ENCODE measurements at regions of chr17 and their contacts with region 1.

Region 1: GRCh38 chr17:28552246-28552999 is at the start of gene UNC119:
- DNase-seq: no peak
- ATAC-seq: peak; percentile 78
- H3K4me3 ChIP-seq: peak within 1 kb of the TSS; percentile 98
- H3K27ac ChIP-seq: peak within 1 kb of the TSS; percentile 73
- H3K4me1 ChIP-seq: peaks cover 33% of the 10 kb centered on the region
- H3K27me3 ChIP-seq: no peaks in the 10 kb centered on the region
- CTCF ChIP-seq: no peak
- EP300 ChIP-seq: no peak
- POLR2A ChIP-seq: peak; percentile 90
- RAD21 ChIP-seq: no peak
- polyA plus RNA-seq, gene UNC119: 2.7 to 7.4 TPM

Region 2: GRCh38 chr17:28371245-28372202 is 180.9 kb before region 1 on chr17 and contains the start of gene SARM1:
- CTCF ChIA-PET with region 1: no interaction called
- POLR2A ChIA-PET with region 1: no interaction called
- RAD21 ChIA-PET with region 1: no interaction called
- SMC1A ChIA-PET with region 1: no interaction called
- in situ Hi-C with region 1: loop called (anchors 10 kb)
- intact Hi-C with region 1: loop called (anchors 10 kb)
- DNase-seq: peak; percentile 63
- ATAC-seq: peak; percentile 97
- H3K4me3 ChIP-seq: peak within 1 kb of the TSS; percentile 88
- H3K27ac ChIP-seq: no peak within 1 kb of the TSS
- H3K4me1 ChIP-seq: peaks cover 7% of the 10 kb centered on the region
- H3K27me3 ChIP-seq: no peaks in the 10 kb centered on the region
- CTCF ChIP-seq: no peak
- EP300 ChIP-seq: no peak
- POLR2A ChIP-seq: peak; percentile 76
- RAD21 ChIP-seq: no peak
- polyA plus RNA-seq, gene SARM1: 0.56 to 1.5 TPM

Region 3: DNA sequence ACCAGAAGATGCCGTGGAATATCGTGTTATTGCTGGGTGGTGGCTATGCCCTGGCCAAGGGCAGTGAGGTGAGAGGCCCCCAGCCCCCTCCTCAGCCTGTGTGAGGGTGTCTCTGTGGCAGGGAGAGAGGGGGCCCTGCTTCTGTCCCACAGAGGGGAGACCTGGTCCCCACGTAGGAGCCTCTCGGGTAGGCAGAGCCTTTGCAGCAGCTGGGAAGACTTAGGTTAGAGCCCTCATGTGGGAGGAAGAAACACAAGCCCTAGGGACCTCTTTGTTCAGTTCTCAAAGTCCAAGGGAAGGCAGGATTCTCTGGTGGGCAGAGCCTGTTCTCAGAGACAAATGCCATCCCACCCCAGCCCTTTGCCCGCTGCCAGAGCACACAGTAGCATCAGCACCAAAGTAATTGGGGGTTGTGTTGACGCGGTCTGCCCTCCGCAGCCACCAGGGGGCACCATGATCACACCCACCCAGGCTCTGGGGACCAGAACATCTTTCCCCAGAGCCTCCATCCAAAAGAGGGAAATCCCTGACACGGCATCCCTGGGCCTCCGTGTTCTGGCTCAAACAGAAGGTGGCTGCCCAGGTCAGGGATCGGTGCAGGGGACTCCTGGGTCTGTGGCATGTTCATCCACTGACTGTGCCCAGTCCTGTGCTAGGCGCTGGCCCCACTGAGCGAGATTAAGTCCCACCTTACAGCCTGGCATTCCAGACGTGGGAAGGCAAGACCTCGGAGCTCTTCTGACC is 57.8 kb before region 1 on chr17:
- CTCF ChIA-PET with region 1: interaction called, 316 read pairs
- POLR2A ChIA-PET with region 1: interaction called, 48 read pairs
- RAD21 ChIA-PET with region 1: interaction called, 37 read pairs
- SMC1A ChIA-PET with region 1: interaction called, 53 read pairs
- in situ Hi-C with region 1: loop called (anchors 5 kb)
- intact Hi-C with region 1: no loop called
- DNase-seq: no peak
- ATAC-seq: peak; percentile 95
- H3K4me3 ChIP-seq: no peak overlapping the region
- H3K27ac ChIP-seq: no peak overlapping the region
- H3K4me1 ChIP-seq: peaks cover 9% of the 10 kb centered on the region
- H3K27me3 ChIP-seq: no peaks in the 10 kb centered on the region
- CTCF ChIP-seq: peak; percentile 91 to 99 (median 92); a peak in 5 of 6 replicates
- EP300 ChIP-seq: no peak
- POLR2A ChIP-seq: no peak
- RAD21 ChIP-seq: peak; percentile 95

Region 4: DNA sequence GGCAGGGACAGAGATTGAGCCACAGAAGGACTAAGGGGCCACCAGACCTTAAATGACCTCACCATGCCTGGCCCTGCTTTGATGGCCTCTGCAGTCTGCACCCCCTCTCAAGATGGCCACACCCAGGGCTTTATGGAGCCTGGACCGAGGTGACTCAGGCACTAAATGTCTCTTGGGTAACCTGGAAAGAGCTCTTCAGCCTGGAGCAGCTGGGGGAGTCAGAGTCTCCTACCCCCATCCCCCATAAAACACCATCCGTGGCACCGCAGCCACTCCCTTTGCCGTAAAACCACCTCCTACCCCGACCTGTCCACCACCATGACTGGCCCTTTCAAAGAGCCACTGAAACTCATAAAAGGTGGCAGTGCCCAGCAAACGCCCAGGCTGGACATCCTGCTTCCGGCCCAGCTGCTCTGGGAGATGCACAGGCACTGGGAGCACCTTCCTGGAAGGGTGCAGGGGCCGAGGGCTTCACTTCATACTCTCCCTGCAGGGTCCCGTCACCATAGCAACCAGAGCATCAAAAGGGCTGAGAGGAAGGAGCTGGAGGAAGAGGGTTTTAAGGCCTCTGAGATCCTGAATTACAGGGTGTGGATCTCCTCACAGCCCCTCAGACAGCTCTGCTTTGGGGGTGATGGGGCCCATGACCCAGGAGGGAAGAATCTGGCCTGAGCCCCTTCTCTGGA is 24.0 kb before region 1 on chr17:
- CTCF ChIA-PET with region 1: no interaction called
- POLR2A ChIA-PET with region 1: no interaction called
- RAD21 ChIA-PET with region 1: no interaction called
- SMC1A ChIA-PET with region 1: no interaction called
- in situ Hi-C with region 1: no loop called
- intact Hi-C with region 1: no loop called
- DNase-seq: no peak
- ATAC-seq: no peak
- H3K4me3 ChIP-seq: no peak overlapping the region
- H3K27ac ChIP-seq: no peak overlapping the region
- H3K4me1 ChIP-seq: no peaks in the 10 kb centered on the region
- H3K27me3 ChIP-seq: no peaks in the 10 kb centered on the region; a peak in 1 of 4 replicates
- CTCF ChIP-seq: no peak
- EP300 ChIP-seq: no peak
- POLR2A ChIP-seq: no peak
- RAD21 ChIP-seq: no peak

Region 5: DNA sequence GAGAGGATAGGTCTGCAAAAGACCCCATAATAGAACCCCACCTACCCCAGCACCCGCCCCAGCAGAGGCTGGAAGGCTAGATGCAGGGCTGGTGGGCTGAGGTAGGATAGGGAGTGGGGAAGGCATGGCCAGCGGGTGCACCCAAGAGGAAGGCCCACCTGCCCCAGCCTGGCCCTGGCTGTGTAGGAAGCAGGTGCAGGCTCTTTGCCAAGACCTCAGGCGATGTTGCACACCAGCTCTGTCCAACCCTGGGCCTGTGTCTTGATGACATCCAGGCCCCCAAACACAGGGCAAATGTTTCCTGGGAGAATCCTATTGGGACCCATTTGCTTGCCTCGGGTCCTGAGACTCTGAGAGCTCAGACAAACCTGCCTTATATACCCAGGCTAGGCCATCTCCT is 12.2 kb before region 1 on chr17:
- CTCF ChIA-PET with region 1: interaction called, 7 read pairs
- POLR2A ChIA-PET with region 1: interaction called, 5 read pairs
- RAD21 ChIA-PET with region 1: interaction called, 5 read pairs
- SMC1A ChIA-PET with region 1: interaction called, 10 read pairs
- in situ Hi-C with region 1: no loop called
- intact Hi-C with region 1: no loop called
- DNase-seq: no peak
- ATAC-seq: no peak
- H3K4me3 ChIP-seq: no peak overlapping the region
- H3K27ac ChIP-seq: no peak overlapping the region
- H3K4me1 ChIP-seq: no peaks in the 10 kb centered on the region
- H3K27me3 ChIP-seq: no peaks in the 10 kb centered on the region
- CTCF ChIP-seq: no peak
- EP300 ChIP-seq: no peak
- POLR2A ChIP-seq: no peak
- RAD21 ChIP-seq: no peak

Region 6: DNA sequence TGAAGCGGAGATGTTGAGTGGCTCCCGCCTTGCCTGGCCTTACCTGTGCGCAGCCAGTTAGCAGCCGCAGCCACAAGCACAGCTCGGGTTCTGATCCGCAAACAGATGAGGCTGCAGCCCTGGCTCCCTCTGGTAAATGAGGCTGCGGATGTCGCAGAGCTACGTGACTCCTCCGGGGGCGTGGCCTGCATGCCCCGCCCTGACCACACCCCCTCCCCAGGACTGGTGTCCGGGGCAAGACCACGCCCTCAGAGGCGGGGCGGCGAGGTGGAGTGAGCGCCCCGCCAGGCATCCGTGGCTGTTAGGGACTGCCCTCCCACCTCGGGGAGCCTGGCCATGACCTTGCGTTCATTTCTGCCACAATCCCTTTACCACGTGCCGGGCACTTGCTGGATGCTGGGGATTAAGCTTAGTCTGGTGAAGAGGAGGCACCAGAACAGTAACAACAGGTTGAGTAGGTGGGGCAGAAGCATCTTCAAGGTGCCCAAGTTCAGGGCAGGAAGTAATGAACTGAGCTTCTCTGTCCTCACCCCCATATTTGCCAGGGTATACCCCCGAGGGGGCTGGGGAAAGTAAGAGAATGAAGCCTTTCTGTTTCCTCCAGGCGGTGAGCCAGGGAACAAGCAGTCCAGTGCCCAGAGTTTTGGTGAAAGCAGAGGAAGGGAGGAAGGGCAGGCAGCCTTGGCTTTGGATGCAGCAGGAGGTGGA is 24.5 kb after region 1 on chr17 and contains the start of gene ALDOC:
- CTCF ChIA-PET with region 1: interaction called, 83 read pairs
- POLR2A ChIA-PET with region 1: interaction called, 148 read pairs
- RAD21 ChIA-PET with region 1: interaction called, 102 read pairs
- SMC1A ChIA-PET with region 1: interaction called, 89 read pairs
- in situ Hi-C with region 1: no loop called
- intact Hi-C with region 1: no loop called
- DNase-seq: peak; percentile 88
- ATAC-seq: peak; percentile 97
- H3K4me3 ChIP-seq: peak within 1 kb of the TSS; percentile 66
- H3K27ac ChIP-seq: peak within 1 kb of the TSS; percentile 46
- H3K4me1 ChIP-seq: peaks cover 29% of the 10 kb centered on the region
- H3K27me3 ChIP-seq: no peaks in the 10 kb centered on the region
- CTCF ChIP-seq: no peak
- EP300 ChIP-seq: no peak
- POLR2A ChIP-seq: peak; percentile 82
- RAD21 ChIP-seq: no peak
- polyA plus RNA-seq, gene ALDOC: 66.6 to 107 TPM

Region 7: GRCh38 chr17:28612936-28613872 is 60.8 kb after region 1 on chr17:
- CTCF ChIA-PET with region 1: interaction called, 88 read pairs
- POLR2A ChIA-PET with region 1: interaction called, 4 read pairs
- RAD21 ChIA-PET with region 1: interaction called, 24 read pairs
- SMC1A ChIA-PET with region 1: interaction called, 18 read pairs
- in situ Hi-C with region 1: no loop called
- intact Hi-C with region 1: loop called (anchors 1 kb)
- DNase-seq: no peak
- ATAC-seq: peak; percentile 87
- H3K4me3 ChIP-seq: no peak overlapping the region
- H3K27ac ChIP-seq: no peak overlapping the region; the same call in 1 of the 2 replicates
- H3K4me1 ChIP-seq: no peaks in the 10 kb centered on the region; the same call in none of the 2 replicates
- H3K27me3 ChIP-seq: no peaks in the 10 kb centered on the region
- CTCF ChIP-seq: peak; percentile 62 to 75 (median 69)
- EP300 ChIP-seq: no peak
- POLR2A ChIP-seq: 0 out of 2 replicates have a peak, but pooled peaks have one; percentile 5
- RAD21 ChIP-seq: peak; percentile 69

Region 8: DNA sequence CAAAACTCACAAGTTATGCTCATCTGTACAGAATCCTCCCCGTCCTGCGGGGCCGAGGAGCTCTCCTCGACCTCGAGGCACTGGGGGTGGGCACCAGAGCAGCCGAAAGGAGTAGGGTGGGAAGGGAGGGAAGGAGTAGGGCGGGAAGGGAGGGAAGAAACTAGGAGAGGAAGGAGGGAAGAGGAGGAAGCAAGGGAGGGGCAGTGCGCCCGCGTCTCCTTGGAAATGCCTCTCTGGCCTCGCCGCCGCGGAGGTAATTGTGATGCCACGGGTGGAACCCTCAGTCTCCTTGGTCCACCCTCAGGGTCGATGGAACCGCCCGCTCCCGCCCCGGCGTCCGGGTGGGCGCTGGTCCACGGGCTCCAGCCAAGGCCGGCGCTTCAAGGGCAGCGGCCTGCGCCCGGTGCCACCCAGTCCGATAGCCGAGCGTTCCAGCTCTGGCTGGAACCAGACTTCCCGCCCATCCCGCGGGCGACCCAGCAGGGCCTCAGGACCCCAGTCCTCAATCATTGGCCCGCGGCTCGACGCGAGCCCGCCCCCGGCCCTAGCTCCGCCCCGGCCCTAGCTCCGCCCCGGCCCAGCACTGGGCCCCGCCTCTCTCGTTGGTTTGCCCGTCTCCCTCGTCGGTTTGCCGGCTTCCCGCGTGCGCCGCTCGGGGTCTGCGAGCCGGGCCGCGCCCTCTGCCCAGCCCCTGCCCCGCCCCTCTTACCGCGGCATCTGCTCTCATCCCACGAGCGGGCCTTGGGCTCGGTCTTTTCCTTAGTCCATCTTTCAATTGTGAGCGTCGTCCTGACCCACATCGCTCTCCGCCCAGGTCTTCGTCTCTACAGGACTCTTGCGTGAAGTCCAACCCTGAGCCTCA is 158.7 kb after region 1 on chr17:
- CTCF ChIA-PET with region 1: no interaction called
- POLR2A ChIA-PET with region 1: interaction called, 11 read pairs
- RAD21 ChIA-PET with region 1: interaction called, 4 read pairs
- SMC1A ChIA-PET with region 1: interaction called, 3 read pairs
- in situ Hi-C with region 1: no loop called
- intact Hi-C with region 1: loop called (anchors 10 kb)
- DNase-seq: peak; percentile 50
- ATAC-seq: peak; percentile 94
- H3K4me3 ChIP-seq: peak overlapping the region; percentile 73
- H3K27ac ChIP-seq: peak overlapping the region; percentile 61
- H3K4me1 ChIP-seq: peaks cover 9% of the 10 kb centered on the region
- H3K27me3 ChIP-seq: no peaks in the 10 kb centered on the region
- CTCF ChIP-seq: no peak
- EP300 ChIP-seq: no peak
- POLR2A ChIP-seq: peak; percentile 62; the same call in 1 of the 2 replicates
- RAD21 ChIP-seq: no peak

Measured in GM12878 (cell line).